ENCODE measurements at regions of chr14 and their contacts with region 1.

Region 1: DNA sequence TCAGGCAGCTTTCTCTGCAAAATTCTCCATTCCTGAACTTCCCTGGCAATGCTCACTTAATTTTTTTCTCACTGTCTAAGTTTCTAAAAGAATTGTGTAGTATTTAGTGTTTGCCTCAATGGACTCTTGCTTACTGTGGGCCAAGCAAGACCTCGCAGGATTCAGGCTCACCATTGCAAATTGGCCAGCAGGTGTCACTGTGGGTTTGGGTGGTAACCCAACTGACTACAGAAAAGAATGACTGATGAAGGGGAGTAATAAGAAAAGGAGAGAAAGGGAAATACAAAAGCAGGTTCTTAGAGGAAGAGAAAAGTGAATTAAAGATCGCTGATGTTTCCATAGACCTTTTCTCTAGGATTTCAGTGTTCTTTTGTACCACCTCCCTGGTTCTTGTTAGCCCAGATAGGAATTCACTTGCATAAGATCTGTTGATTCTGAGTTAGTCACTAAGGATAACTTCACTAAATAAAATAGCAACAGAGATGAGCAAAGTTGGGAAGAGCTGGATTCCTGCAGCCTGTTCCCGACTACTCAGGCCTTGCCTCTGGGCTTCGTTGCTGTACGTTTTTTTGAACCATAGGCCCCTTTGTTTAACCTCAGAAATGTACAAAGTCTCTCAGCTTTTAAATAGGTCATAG is 386.5 kb upstream of the DDHD1 start:
- DNase-seq: peak; percentile 37
- H3K4me3 ChIP-seq: no peak overlapping the region
- H3K27me3 ChIP-seq: no peaks in the 10 kb centered on the region
- CTCF ChIP-seq: peak; percentile 84

Region 2: GRCh38 chr14:52583544-52583943 is 956.1 kb before region 1 on chr14:
- CTCF ChIA-PET with region 1: no interaction called
- POLR2A ChIA-PET with region 1: no interaction called
- DNase-seq: no peak
- H3K4me3 ChIP-seq: no peak overlapping the region
- H3K27me3 ChIP-seq: no peaks in the 10 kb centered on the region
- CTCF ChIP-seq: no peak

Region 3: GRCh38 chr14:53432378-53432802 is 107.2 kb before region 1 on chr14:
- CTCF ChIA-PET with region 1: interaction called, 28 read pairs
- POLR2A ChIA-PET with region 1: no interaction called
- DNase-seq: no peak
- H3K4me3 ChIP-seq: no peak overlapping the region
- H3K27me3 ChIP-seq: no peaks in the 10 kb centered on the region
- CTCF ChIP-seq: peak; percentile 73

Region 4: GRCh38 chr14:53525608-53526007 is 14.0 kb before region 1 on chr14:
- CTCF ChIA-PET with region 1: interaction called, 13 read pairs
- POLR2A ChIA-PET with region 1: interaction called, 4 read pairs
- DNase-seq: no peak
- H3K4me3 ChIP-seq: no peak overlapping the region
- H3K27me3 ChIP-seq: no peaks in the 10 kb centered on the region
- CTCF ChIP-seq: no peak

Region 5: GRCh38 chr14:54329082-54329695 is 789.6 kb after region 1 on chr14:
- CTCF ChIA-PET with region 1: interaction called, 26 read pairs
- POLR2A ChIA-PET with region 1: no interaction called
- DNase-seq: no peak
- H3K4me3 ChIP-seq: no peak overlapping the region
- H3K27me3 ChIP-seq: no peaks in the 10 kb centered on the region
- CTCF ChIP-seq: peak; percentile 89

Region 6: DNA sequence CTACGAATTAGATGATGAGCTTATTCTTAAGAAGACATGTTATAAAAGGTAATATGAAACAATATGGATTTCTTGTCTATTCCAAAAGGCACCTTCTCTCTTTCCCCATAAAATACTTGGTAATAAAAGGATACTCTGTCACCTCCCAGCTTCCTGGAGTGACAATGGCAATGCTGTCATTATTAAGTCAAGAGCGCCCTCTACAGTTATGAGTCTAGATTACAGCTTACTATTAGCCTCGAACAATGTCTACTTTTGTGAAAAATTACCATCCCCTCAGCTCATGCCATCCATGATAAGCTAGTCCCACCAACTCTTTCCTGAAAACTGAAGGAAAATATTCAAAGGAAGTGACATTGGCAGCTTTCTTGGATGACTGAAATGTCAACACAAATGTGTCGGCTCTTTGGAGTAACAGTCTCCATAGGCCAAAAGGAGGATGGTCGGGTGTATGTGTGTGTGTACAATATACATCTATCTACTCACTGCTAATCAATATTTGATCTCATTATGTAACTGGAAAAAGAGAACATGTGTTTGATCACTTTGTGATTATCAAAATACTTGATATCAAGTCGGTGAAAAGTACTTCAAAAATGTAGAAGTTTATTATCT is 808.5 kb after region 1 on chr14:
- CTCF ChIA-PET with region 1: interaction called, 39 read pairs
- POLR2A ChIA-PET with region 1: no interaction called
- DNase-seq: no peak
- H3K4me3 ChIP-seq: no peak overlapping the region
- H3K27me3 ChIP-seq: no peaks in the 10 kb centered on the region
- CTCF ChIP-seq: peak; percentile 68